CD8-positive, alpha-beta T cell (primary cell): ENCODE measurements at regions of chr10 and their contacts with region 1.

Region 1: DNA sequence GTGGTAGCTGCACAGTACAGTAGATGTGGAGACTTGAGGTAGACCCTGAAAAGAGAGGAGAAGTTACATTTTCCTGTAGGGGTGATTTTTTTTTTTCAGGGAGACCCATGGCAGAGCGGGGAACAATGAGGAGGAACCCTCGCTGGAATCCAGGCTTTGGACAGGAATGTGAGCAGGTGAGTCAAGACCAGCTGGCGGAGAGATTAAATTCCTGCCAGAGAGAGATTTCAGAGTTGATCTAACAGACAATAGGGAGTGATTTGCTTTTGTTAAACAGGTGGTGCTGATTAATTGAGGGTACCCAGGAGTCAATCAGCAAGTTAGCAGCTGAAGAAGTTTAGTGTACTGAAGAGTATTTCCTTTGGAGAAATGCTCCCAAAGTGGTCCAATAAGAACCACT is 41.6 kb upstream of the MINDY3 start:
- DNase-seq: no peak
- ATAC-seq: no peak
- H3K4me3 ChIP-seq: no peak overlapping the region
- H3K4me3 Mint-ChIP-seq: no peak overlapping the region
- H3K27ac ChIP-seq: no peak overlapping the region
- H3K27ac Mint-ChIP-seq: no peak overlapping the region
- H3K4me1 ChIP-seq: no peaks in the 10 kb centered on the region
- H3K4me1 Mint-ChIP-seq: no peaks in the 10 kb centered on the region
- H3K27me3 ChIP-seq: peaks cover 0 to 7% of the 10 kb centered on the region in 2 experiments
- H3K27me3 Mint-ChIP-seq: peaks cover 27% of the 10 kb centered on the region
- CTCF ChIP-seq: no peak

Region 2: GRCh38 chr10:15624401-15625196 is 277.3 kb before region 1 on chr10:
- CTCF ChIA-PET with region 1: no interaction called
- POLR2A ChIA-PET with region 1: no interaction called
- intact Hi-C with region 1: no loop called
- DNase-seq: no peak
- ATAC-seq: no peak
- H3K4me3 ChIP-seq: no peak overlapping the region
- H3K4me3 Mint-ChIP-seq: no peak overlapping the region
- H3K27ac ChIP-seq: no peak overlapping the region
- H3K27ac Mint-ChIP-seq: no peak overlapping the region
- H3K4me1 ChIP-seq: no peaks in the 10 kb centered on the region
- H3K4me1 Mint-ChIP-seq: no peaks in the 10 kb centered on the region
- H3K27me3 ChIP-seq: no peaks in the 10 kb centered on the region
- H3K27me3 Mint-ChIP-seq: peaks cover 10% of the 10 kb centered on the region
- CTCF ChIP-seq: no peak

Region 3: GRCh38 chr10:15884447-15884846 is 17.4 kb before region 1 on chr10:
- CTCF ChIA-PET with region 1: interaction called, 12 read pairs
- POLR2A ChIA-PET with region 1: no interaction called
- intact Hi-C with region 1: no loop called
- DNase-seq: no peak
- ATAC-seq: no peak
- H3K4me3 ChIP-seq: no peak overlapping the region
- H3K4me3 Mint-ChIP-seq: no peak overlapping the region
- H3K27ac ChIP-seq: no peak overlapping the region
- H3K27ac Mint-ChIP-seq: no peak overlapping the region
- H3K4me1 ChIP-seq: no peaks in the 10 kb centered on the region
- H3K4me1 Mint-ChIP-seq: no peaks in the 10 kb centered on the region
- H3K27me3 ChIP-seq: peaks cover 0 to 3% of the 10 kb centered on the region in 2 experiments
- H3K27me3 Mint-ChIP-seq: peaks cover 40% of the 10 kb centered on the region
- CTCF ChIP-seq: no peak

Region 4: DNA sequence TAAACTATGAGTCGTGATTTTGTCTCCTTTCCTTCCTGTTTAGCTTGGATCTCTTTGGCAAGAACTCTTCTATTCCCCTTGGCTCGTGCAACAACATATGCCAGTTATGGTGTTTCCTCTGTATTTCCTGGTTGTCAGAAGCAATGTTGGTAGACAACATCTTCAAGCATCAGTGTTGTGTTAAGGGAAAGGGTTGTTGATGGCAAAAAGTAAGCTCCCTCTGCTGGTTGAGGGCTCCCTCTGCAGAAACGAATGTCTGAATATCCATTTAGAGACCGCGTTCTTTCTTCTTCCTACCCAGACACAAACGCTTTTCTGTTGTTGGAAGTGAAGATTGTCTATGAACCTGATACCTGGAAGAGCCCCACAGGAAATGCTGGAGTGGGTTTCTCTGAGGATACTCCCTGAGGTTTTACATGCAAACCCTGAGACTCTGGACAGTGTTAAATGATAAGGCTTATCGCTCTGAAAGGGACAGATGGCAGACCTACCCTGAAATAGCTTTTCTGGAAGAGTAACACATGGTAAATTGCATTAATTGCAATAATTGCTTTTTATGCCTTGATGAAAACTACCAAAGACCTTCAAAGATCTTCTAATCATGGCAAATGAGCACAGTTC is 643.3 kb after region 1 on chr10:
- CTCF ChIA-PET with region 1: interaction called, 3 read pairs
- POLR2A ChIA-PET with region 1: no interaction called
- intact Hi-C with region 1: loop called in 1 of 2 experiments (anchors 5 kb)
- DNase-seq: peak in 2 of 9 experiments; percentile 15 to 37
- ATAC-seq: no peak
- H3K4me3 ChIP-seq: no peak overlapping the region
- H3K4me3 Mint-ChIP-seq: no peak overlapping the region
- H3K27ac ChIP-seq: no peak overlapping the region
- H3K27ac Mint-ChIP-seq: no peak overlapping the region
- H3K4me1 ChIP-seq: no peaks in the 10 kb centered on the region
- H3K4me1 Mint-ChIP-seq: no peaks in the 10 kb centered on the region
- H3K27me3 ChIP-seq: no peaks in the 10 kb centered on the region
- H3K27me3 Mint-ChIP-seq: peaks cover 26% of the 10 kb centered on the region
- CTCF ChIP-seq: no peak

Region 5: GRCh38 chr10:16777473-16778370 is 875.8 kb after region 1 on chr10:
- CTCF ChIA-PET with region 1: interaction called, 8 read pairs
- POLR2A ChIA-PET with region 1: no interaction called
- intact Hi-C with region 1: loop called (anchors 1 to 2 kb)
- DNase-seq: peak in 3 of 9 experiments; percentile 50 to 81 (median 69)
- ATAC-seq: peak; percentile 67
- H3K4me3 ChIP-seq: no peak overlapping the region
- H3K4me3 Mint-ChIP-seq: no peak overlapping the region
- H3K27ac ChIP-seq: no peak overlapping the region
- H3K27ac Mint-ChIP-seq: peak overlapping the region; percentile 82
- H3K4me1 ChIP-seq: peaks cover 11% of the 10 kb centered on the region
- H3K4me1 Mint-ChIP-seq: peaks cover 40% of the 10 kb centered on the region
- H3K27me3 ChIP-seq: no peaks in the 10 kb centered on the region
- H3K27me3 Mint-ChIP-seq: no peaks in the 10 kb centered on the region
- CTCF ChIP-seq: peak; percentile 67

Region 6: GRCh38 chr10:16809074-16809718 is 907.3 kb after region 1 on chr10:
- CTCF ChIA-PET with region 1: interaction called, 3 read pairs
- POLR2A ChIA-PET with region 1: no interaction called
- intact Hi-C with region 1: loop called (anchors 2 kb)
- DNase-seq: peak in 7 of 9 experiments; percentile 27 to 69 (median 39)
- ATAC-seq: peak; percentile 77
- H3K4me3 ChIP-seq: no peak overlapping the region
- H3K4me3 Mint-ChIP-seq: no peak overlapping the region
- H3K27ac ChIP-seq: no peak overlapping the region
- H3K27ac Mint-ChIP-seq: peak overlapping the region; percentile 14
- H3K4me1 ChIP-seq: no peaks in the 10 kb centered on the region
- H3K4me1 Mint-ChIP-seq: peaks cover 31% of the 10 kb centered on the region
- H3K27me3 ChIP-seq: no peaks in the 10 kb centered on the region
- H3K27me3 Mint-ChIP-seq: no peaks in the 10 kb centered on the region
- CTCF ChIP-seq: peak; percentile 32